Activated B cell treated with CpG ODN at 0.5 μM for 24 hours (primary cell): ENCODE measurements at regions of chr14 and their contacts with region 1.

Region 1: GRCh38 chr14:42299692-42300091 is 693.0 kb downstream of the LRFN5 start:
- DNase-seq: no peak
- ATAC-seq: peak; percentile 99
- H3K4me3 Mint-ChIP-seq: peak overlapping the region; percentile 39
- H3K27ac Mint-ChIP-seq: no peak overlapping the region
- H3K4me1 Mint-ChIP-seq: peaks cover 14% of the 10 kb centered on the region
- H3K27me3 Mint-ChIP-seq: no peaks in the 10 kb centered on the region
- CTCF ChIP-seq: no peak

Region 2: DNA sequence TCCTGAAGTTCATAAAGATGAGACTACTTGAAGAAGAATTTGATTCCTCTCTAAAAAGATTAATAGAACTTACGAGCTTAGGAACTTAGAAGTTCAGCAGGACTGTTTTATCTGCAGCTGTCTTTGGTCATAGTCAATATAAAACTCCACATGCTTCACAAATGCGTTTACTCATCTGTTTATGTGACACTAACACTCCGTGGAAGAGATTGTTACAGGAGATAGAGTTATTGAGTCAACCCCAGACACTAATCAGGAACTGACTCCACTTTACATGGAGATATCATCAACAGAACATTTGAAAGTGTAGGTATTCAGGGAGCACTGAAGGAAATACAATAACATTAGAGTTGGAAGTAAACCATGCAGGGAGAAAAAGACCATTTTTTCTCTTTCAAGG is 600.2 kb before region 1 on chr14:
- CTCF ChIA-PET with region 1: no interaction called
- POLR2A ChIA-PET with region 1: no interaction called
- intact Hi-C with region 1: no loop called
- DNase-seq: no peak
- ATAC-seq: no peak
- H3K4me3 Mint-ChIP-seq: no peak overlapping the region
- H3K27ac Mint-ChIP-seq: no peak overlapping the region
- H3K4me1 Mint-ChIP-seq: no peaks in the 10 kb centered on the region
- H3K27me3 Mint-ChIP-seq: no peaks in the 10 kb centered on the region
- CTCF ChIP-seq: no peak

Region 3: DNA sequence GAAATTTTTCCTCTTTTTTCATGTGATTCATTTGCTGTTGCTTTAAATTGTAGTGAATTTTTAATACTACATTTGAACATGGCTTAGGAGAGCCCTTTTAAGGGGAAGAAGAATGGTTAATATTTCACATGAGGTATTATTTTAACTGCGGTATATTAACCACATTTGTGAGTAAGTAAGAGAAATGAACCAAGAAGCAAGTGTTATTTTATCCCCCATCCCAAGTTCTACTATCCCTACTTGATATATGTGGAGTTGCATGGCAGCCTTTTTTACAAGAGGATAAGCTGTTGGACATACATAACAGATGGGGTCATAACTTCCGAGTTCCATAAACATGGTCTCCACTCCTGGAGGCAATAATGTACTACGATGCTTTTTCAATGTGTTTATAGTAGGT is 69.7 kb before region 1 on chr14:
- CTCF ChIA-PET with region 1: no interaction called
- POLR2A ChIA-PET with region 1: no interaction called
- intact Hi-C with region 1: no loop called
- DNase-seq: no peak
- ATAC-seq: no peak
- H3K4me3 Mint-ChIP-seq: no peak overlapping the region
- H3K27ac Mint-ChIP-seq: no peak overlapping the region
- H3K4me1 Mint-ChIP-seq: no peaks in the 10 kb centered on the region
- H3K27me3 Mint-ChIP-seq: no peaks in the 10 kb centered on the region
- CTCF ChIP-seq: no peak

Region 4: DNA sequence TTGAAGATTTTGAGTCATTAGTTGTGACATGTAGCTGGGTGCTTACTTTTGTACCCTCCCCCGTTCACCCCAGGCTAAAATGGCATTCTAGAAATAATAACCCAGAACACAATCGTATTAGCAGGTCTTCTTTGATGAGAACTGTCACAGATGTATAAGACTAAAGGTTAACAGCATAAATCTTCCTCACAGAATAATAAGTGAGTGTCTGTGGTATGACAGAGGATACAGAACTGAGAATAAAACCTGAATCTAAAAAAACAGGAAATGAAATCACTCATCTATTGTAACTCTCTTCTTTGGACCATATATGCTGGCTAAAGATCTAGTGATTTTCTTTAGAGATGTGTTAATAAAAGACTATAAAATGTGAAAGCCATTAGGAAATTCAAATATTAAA is 53.6 kb after region 1 on chr14:
- CTCF ChIA-PET with region 1: no interaction called
- POLR2A ChIA-PET with region 1: no interaction called
- intact Hi-C with region 1: loop called (anchors 2 kb)
- DNase-seq: no peak
- ATAC-seq: peak; percentile 90
- H3K4me3 Mint-ChIP-seq: peak overlapping the region; percentile 53
- H3K27ac Mint-ChIP-seq: peak overlapping the region; percentile 65
- H3K4me1 Mint-ChIP-seq: peaks cover 18% of the 10 kb centered on the region
- H3K27me3 Mint-ChIP-seq: no peaks in the 10 kb centered on the region
- CTCF ChIP-seq: no peak

Region 5: DNA sequence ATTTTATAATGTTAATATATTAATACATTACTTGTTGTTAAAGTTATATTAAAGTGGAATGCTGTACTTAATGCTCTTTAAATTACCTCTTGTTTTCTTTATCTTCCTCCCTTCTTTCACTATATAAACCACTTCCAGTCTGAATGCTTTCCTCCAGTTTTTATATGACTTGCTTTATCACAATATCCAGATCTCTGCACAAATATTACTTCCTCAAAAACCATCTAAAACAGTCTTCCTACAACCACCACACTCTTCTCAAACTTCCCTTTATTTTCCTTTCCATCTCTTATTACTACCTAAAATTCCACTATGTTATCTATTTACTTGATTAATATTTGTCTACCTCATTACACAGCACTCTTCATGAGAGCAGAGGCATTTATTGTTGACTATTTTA is 263.6 kb after region 1 on chr14:
- CTCF ChIA-PET with region 1: no interaction called
- POLR2A ChIA-PET with region 1: interaction called, 3 read pairs
- intact Hi-C with region 1: loop called (anchors 10 kb)
- DNase-seq: no peak
- ATAC-seq: no peak
- H3K4me3 Mint-ChIP-seq: no peak overlapping the region
- H3K27ac Mint-ChIP-seq: no peak overlapping the region
- H3K4me1 Mint-ChIP-seq: no peaks in the 10 kb centered on the region
- H3K27me3 Mint-ChIP-seq: no peaks in the 10 kb centered on the region
- CTCF ChIP-seq: no peak